PC-3 (cell line): ENCODE measurements at regions of chr1 and their contacts with region 1.

Region 1: DNA sequence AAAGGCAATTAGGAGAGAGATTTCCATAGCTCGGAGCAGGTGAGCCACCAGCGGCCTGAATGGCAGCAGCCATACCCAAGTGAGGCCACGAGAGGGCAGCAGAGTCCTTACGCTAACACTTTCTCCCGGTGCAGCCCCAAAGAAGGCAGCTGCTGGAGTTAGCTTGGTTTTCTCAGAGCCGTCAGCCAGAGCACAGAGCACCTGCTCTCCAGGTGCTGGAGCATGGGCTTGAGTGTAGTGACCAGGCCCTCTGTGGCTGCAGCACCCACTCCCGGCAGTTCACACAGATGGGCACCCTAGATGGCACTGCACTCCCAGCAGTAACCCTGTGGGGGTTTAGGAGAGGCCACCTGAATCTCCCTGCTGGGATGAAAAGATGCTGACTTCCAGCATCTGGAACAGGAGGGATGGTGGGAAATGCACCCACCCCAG is 45.8 kb downstream of the TMCC2 start:
- DNase-seq: peak; percentile 93
- ATAC-seq: peak; percentile 70
- H3K4me3 ChIP-seq: no peak overlapping the region
- H3K27ac ChIP-seq: no peak overlapping the region
- H3K4me1 ChIP-seq: peaks cover 16% of the 10 kb centered on the region
- H3K27me3 ChIP-seq: no peaks in the 10 kb centered on the region
- CTCF ChIP-seq: peak; percentile 99

Region 2: DNA sequence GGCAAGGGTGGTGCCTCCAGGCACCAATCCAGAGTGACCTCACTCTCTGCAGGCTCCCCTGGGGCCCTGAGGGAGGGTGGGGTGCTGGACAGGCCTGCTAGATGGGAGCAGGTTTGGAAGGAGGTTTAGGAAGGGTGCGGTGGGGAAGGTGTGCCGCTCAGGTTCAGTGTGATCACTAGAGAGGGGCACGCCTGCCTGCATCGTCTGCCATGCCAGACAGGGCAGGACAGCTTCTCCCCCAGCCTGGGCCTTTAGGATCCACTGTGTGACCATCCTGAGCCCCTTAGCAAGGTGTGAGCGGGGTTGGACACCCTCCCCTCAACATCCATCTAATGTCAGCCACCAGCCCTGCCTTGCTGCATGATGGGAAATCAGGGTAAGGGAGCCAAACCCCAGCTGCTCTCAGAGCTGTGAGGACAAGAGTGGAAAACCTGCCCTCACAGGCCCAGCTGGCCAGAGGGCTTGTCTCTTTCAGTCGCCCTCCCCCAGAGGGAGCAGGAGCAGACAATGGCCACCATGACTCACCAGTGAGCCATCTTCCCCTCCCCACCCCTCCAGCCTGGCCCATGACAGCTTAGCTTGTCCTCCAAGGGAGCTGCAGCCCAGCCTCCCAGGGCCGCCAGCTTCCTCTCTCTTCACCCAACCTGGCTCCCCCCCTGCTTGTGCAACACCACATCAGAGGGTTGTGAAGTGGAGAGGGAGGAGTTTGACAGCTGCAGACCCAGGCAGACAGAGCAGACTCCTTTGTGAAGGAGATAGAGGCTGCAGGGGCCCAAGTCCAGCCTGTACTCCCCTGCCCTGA is 11.0 kb after region 1 on chr1:
- CTCF ChIA-PET with region 1: interaction called, 15 read pairs
- POLR2A ChIA-PET with region 1: interaction called, 5 read pairs
- intact Hi-C with region 1: no loop called
- DNase-seq: peak; percentile 99
- ATAC-seq: peak; percentile 98
- H3K4me3 ChIP-seq: no peak overlapping the region
- H3K27ac ChIP-seq: peak overlapping the region; percentile 66
- H3K4me1 ChIP-seq: peaks cover 45% of the 10 kb centered on the region
- H3K27me3 ChIP-seq: no peaks in the 10 kb centered on the region
- CTCF ChIP-seq: no peak

Region 3: GRCh38 chr1:205321164-205321958 is 47.8 kb after region 1 on chr1 and contains the start of gene NUAK2:
- CTCF ChIA-PET with region 1: interaction called, 103 read pairs
- POLR2A ChIA-PET with region 1: interaction called, 5 read pairs
- intact Hi-C with region 1: loop called (anchors 1 kb)
- DNase-seq: peak; percentile 94
- ATAC-seq: peak; percentile 86
- H3K4me3 ChIP-seq: peak within 1 kb of the TSS; percentile 82
- H3K27ac ChIP-seq: no peak within 1 kb of the TSS
- H3K4me1 ChIP-seq: peaks cover 42% of the 10 kb centered on the region
- H3K27me3 ChIP-seq: no peaks in the 10 kb centered on the region
- CTCF ChIP-seq: peak; percentile 53
- total RNA-seq, gene NUAK2: 3.8 and 4.8 TPM in 2 replicates

Region 4: GRCh38 chr1:205335643-205336091 is 62.1 kb after region 1 on chr1:
- CTCF ChIA-PET with region 1: interaction called, 12 read pairs
- POLR2A ChIA-PET with region 1: no interaction called
- intact Hi-C with region 1: no loop called
- DNase-seq: peak; percentile 93
- ATAC-seq: peak; percentile 98
- H3K4me3 ChIP-seq: no peak overlapping the region
- H3K27ac ChIP-seq: no peak overlapping the region
- H3K4me1 ChIP-seq: no peaks in the 10 kb centered on the region
- H3K27me3 ChIP-seq: no peaks in the 10 kb centered on the region
- CTCF ChIP-seq: peak; percentile 99